Left ventricle myocardium inferior (tissue), 1 donor: ENCODE measurements at regions of chr5 and their contacts with region 1.

Region 1: DNA sequence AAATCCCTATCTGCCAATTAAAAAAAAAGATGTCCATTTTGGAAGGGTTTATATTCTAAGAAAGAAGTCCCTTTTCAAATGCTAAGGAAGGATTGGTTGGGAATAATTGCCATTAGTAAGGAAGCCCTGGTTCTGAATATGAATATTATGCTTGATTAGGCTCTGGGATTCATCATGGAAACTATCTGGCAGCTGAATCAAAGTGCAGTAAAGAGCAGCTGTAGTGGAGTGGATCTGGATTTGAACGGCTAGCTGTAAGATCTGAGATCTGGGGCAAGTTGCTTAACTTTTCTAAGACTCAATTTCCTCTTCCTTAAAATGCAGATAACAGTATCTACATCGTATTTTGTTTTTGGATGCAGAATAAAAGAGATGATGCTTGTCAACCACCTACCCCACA is 10.5 kb downstream of the IL12B start:
- DNase-seq: no peak
- H3K4me3 ChIP-seq: no peak overlapping the region
- H3K27ac ChIP-seq: no peak overlapping the region
- H3K4me1 ChIP-seq: no peaks in the 10 kb centered on the region
- H3K27me3 ChIP-seq: peaks cover 12% of the 10 kb centered on the region
- CTCF ChIP-seq: no peak

Region 2: GRCh38 chr5:159156426-159157238 is 163.2 kb before region 1 on chr5:
- intact Hi-C with region 1: loop called (anchors 2 kb)
- DNase-seq: no peak
- H3K4me3 ChIP-seq: no peak overlapping the region
- H3K27ac ChIP-seq: no peak overlapping the region
- H3K4me1 ChIP-seq: peaks cover 16% of the 10 kb centered on the region
- H3K27me3 ChIP-seq: no peaks in the 10 kb centered on the region
- CTCF ChIP-seq: peak; percentile 90

Region 3: GRCh38 chr5:159548517-159548916 is 228.7 kb after region 1 on chr5:
- intact Hi-C with region 1: no loop called
- DNase-seq: no peak
- H3K4me3 ChIP-seq: no peak overlapping the region
- H3K27ac ChIP-seq: no peak overlapping the region
- H3K4me1 ChIP-seq: no peaks in the 10 kb centered on the region
- H3K27me3 ChIP-seq: no peaks in the 10 kb centered on the region
- CTCF ChIP-seq: no peak